Naive thymus-derived CD4-positive, alpha-beta T cell (primary cell): ENCODE measurements at regions of chr2 and their contacts with region 1.

Region 1: DNA sequence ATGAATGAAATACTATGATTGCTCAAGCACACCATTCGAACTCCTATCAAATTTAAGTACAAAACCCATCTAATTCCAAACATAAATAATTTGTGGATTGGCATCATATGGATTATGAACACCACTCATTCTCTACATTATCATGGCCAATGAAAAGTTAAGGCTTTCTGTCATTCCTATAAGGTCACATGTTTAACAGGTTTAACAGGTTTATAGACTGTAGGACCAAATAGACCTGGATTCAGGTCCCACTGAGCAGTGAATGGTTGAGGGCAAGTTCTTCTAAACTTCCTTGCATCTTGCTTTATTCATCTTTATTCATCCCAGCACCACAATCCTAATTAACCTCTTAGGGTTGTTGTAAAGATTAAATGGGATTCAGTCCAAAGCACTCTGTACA is 33.4 kb downstream of the FBXO36 start:
- DNase-seq: no peak
- ATAC-seq: no peak
- H3K4me3 ChIP-seq: no peak overlapping the region
- H3K4me3 Mint-ChIP-seq: no peak overlapping the region
- H3K27ac ChIP-seq: no peak overlapping the region
- H3K27ac Mint-ChIP-seq: no peak overlapping the region
- H3K4me1 ChIP-seq: no peaks in the 10 kb centered on the region
- H3K4me1 Mint-ChIP-seq: peaks cover 0 to 2% (median 0%) of the 10 kb centered on the region in 7 donors
- H3K27me3 ChIP-seq: no peaks in the 10 kb centered on the region
- H3K27me3 Mint-ChIP-seq: no peaks in the 10 kb centered on the region

Region 2: GRCh38 chr2:230053753-230054478 is 98.3 kb after region 1 on chr2:
- CTCF ChIA-PET with region 1: interaction called, 10 read pairs
- POLR2A ChIA-PET with region 1: no interaction called
- intact Hi-C with region 1: no loop called
- DNase-seq: no peak
- ATAC-seq: no peak
- H3K4me3 ChIP-seq: no peak overlapping the region
- H3K4me3 Mint-ChIP-seq: no peak overlapping the region
- H3K27ac ChIP-seq: no peak overlapping the region
- H3K27ac Mint-ChIP-seq: no peak overlapping the region
- H3K4me1 ChIP-seq: no peaks in the 10 kb centered on the region
- H3K4me1 Mint-ChIP-seq: no peaks in the 10 kb centered on the region
- H3K27me3 ChIP-seq: no peaks in the 10 kb centered on the region
- H3K27me3 Mint-ChIP-seq: no peaks in the 10 kb centered on the region